ENCODE measurements at regions of chr3 and their contacts with region 1.

Region 1: GRCh38 chr3:187738331-187739093 is 6.8 kb downstream of the BCL6 start:
- DNase-seq: peak; percentile 48 to 85 (median 57)
- ATAC-seq: peak; percentile 48
- H3K4me3 ChIP-seq: peak overlapping the region; percentile 96
- H3K4me3 Mint-ChIP-seq: peak overlapping the region; percentile 100
- H3K27ac ChIP-seq: peak overlapping the region in 1 of 2 donors; percentile 56
- H3K27ac Mint-ChIP-seq: peak overlapping the region; percentile 99
- H3K4me1 ChIP-seq: peaks cover 65% of the 10 kb centered on the region
- H3K4me1 Mint-ChIP-seq: peaks cover 51% of the 10 kb centered on the region
- H3K27me3 ChIP-seq: no peaks in the 10 kb centered on the region
- H3K27me3 Mint-ChIP-seq: no peaks in the 10 kb centered on the region
- CTCF ChIP-seq: peak; percentile 91

Region 2: DNA sequence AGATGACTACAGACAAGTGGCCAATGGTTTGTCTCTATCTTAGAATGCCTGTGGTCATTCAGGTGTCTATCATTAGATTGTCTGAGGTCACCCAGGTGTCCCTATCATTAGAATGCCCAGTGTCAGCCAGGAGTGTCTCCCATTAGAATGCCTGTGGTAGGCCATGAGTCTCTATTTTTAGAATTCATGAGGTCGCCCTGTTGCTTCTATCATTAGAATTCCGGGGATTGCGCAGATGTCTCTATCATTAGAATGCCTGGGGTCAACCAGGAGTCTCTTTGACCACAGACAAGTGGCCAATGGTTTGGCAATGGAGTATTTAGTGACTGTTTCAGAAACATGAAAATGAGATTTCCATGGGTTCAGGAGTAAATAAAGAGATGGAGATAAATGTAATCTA is 43.7 kb before region 1 on chr3:
- CTCF ChIA-PET with region 1: no interaction called
- POLR2A ChIA-PET with region 1: no interaction called
- intact Hi-C with region 1: no loop called
- DNase-seq: no peak
- ATAC-seq: no peak
- H3K4me3 ChIP-seq: no peak overlapping the region
- H3K4me3 Mint-ChIP-seq: no peak overlapping the region
- H3K27ac ChIP-seq: no peak overlapping the region
- H3K27ac Mint-ChIP-seq: no peak overlapping the region
- H3K4me1 ChIP-seq: no peaks in the 10 kb centered on the region
- H3K4me1 Mint-ChIP-seq: no peaks in the 10 kb centered on the region
- H3K27me3 ChIP-seq: peaks cover 0 to 10% of the 10 kb centered on the region in 2 experiments
- H3K27me3 Mint-ChIP-seq: peaks cover 44% of the 10 kb centered on the region
- CTCF ChIP-seq: no peak

Region 3: GRCh38 chr3:187974871-187975271 is 236.4 kb after region 1 on chr3:
- CTCF ChIA-PET with region 1: interaction called, 13 read pairs
- POLR2A ChIA-PET with region 1: interaction called, 4 read pairs
- intact Hi-C with region 1: no loop called
- DNase-seq: peak in 3 of 14 experiments; percentile 68 to 78 (median 73)
- ATAC-seq: peak; percentile 64
- H3K4me3 ChIP-seq: peak overlapping the region; percentile 24
- H3K4me3 Mint-ChIP-seq: peak overlapping the region; percentile 43
- H3K27ac ChIP-seq: peak overlapping the region; percentile 39 to 65
- H3K27ac Mint-ChIP-seq: peak overlapping the region; percentile 84
- H3K4me1 ChIP-seq: peaks cover 50% of the 10 kb centered on the region
- H3K4me1 Mint-ChIP-seq: peaks cover 54% of the 10 kb centered on the region
- H3K27me3 ChIP-seq: no peaks in the 10 kb centered on the region
- H3K27me3 Mint-ChIP-seq: no peaks in the 10 kb centered on the region
- CTCF ChIP-seq: peak; percentile 56

Region 4: DNA sequence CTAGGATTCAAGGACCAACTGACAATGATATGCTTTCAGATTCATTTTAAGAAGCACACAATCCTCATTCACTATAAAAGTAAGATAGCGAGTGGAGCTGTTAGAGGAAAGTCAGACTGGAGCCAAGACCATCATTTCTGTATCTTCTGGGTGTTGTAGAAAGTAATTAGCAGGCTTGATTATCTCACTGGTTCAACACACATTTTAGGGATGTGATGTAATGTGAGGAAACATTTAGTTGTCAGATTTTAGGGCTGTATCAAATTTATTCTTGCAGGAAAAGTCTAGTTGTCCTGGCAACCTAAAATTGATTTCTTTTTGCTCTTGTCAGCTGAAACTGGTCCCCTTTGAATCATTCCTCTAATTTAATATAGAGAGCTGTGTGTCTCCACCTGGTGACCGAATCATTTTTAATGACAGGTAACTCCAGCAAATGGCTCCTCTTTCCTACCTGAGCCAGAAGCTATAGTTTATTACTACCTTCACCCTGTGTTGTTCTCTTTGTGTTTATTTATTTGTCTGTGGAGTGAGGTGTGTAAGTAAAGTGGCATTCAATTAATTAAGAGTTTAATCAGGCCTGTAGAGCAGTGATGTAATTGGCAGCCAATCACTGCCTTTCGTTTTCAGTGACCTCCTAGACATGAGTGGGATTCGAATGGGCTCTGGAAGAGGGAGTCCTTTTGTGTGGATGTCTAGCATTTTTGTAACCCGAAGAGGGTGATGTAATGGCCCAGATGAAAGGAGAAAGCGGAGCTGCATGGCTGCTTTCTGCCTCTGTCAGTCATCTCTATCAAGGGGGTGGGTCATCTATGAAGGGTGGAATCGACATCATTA is 541.2 kb after region 1 on chr3:
- CTCF ChIA-PET with region 1: interaction called, 8 read pairs
- POLR2A ChIA-PET with region 1: no interaction called
- intact Hi-C with region 1: loop called in 1 of 2 experiments (anchors 5 kb)
- DNase-seq: peak in 2 of 14 experiments; percentile 23 to 25
- ATAC-seq: no peak
- H3K4me3 ChIP-seq: no peak overlapping the region
- H3K4me3 Mint-ChIP-seq: no peak overlapping the region
- H3K27ac ChIP-seq: no peak overlapping the region
- H3K27ac Mint-ChIP-seq: no peak overlapping the region
- H3K4me1 ChIP-seq: peaks cover 9% of the 10 kb centered on the region
- H3K4me1 Mint-ChIP-seq: peaks cover 22% of the 10 kb centered on the region
- H3K27me3 ChIP-seq: no peaks in the 10 kb centered on the region
- H3K27me3 Mint-ChIP-seq: no peaks in the 10 kb centered on the region
- CTCF ChIP-seq: no peak

Region 5: DNA sequence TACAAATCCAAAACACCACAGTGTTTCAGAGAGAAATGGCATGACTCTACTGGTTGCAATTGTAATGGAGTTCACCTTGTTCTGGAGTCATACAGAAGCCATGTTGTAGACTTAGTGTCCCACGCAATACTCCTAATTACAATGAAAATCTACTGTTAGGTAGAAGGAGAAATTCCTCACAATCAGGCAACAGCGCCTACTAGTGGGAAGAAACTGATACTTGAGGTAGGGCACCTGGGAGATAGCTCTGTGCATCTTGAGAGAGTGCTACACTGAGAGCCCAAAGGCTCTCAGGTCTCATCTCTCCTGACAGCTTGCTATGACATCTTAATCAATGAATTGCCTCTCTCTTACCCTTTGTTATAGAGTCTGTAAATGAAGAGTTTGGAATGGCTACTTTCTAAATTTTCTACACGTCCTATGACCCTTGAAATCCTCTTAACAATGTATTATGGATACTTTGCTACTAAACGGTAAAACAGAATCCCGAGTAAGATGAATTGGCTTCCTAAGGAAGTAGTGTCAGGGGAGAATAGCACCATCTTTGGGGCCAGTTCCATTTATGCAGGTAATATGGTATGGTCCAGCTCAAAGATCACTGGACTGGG is 1010.6 kb after region 1 on chr3:
- CTCF ChIA-PET with region 1: interaction called, 57 read pairs
- POLR2A ChIA-PET with region 1: interaction called, 16 read pairs
- intact Hi-C with region 1: loop called (anchors 1 kb)
- DNase-seq: peak; percentile 10 to 79 (median 44)
- ATAC-seq: peak; percentile 80
- H3K4me3 ChIP-seq: no peak overlapping the region
- H3K4me3 Mint-ChIP-seq: no peak overlapping the region
- H3K27ac ChIP-seq: no peak overlapping the region
- H3K27ac Mint-ChIP-seq: no peak overlapping the region
- H3K4me1 ChIP-seq: no peaks in the 10 kb centered on the region
- H3K4me1 Mint-ChIP-seq: peaks cover 5% of the 10 kb centered on the region
- H3K27me3 ChIP-seq: no peaks in the 10 kb centered on the region
- H3K27me3 Mint-ChIP-seq: no peaks in the 10 kb centered on the region
- CTCF ChIP-seq: peak; percentile 71

Region 6: DNA sequence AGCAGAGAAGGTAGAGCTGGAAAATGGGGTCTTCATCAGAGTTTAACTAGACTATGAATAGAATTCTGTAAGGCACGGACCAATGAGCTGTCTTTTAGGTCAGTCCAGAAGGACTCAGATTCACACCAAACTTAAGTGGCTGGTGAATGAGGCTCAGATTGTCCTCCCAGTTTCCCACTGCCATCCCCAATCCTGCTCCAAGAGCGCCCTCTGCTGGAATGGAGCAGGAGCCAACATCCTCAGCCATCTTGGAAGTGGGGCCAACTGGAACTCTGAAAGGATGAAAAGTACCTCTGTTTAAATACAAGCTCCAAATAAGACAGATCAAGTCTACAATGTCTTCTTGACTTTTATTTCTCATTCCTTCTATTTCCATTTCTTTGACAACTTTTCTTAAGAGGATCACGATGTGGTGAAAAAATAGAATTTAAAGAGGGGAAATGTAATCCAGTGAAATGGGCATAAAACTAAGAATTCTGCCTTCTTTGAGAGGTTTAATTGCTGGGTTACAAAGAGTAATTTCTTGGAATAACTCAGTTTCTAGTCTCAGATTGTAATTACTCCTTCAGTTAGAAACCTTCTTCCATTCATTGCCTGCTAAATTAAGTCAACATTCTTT is 1216.2 kb after region 1 on chr3:
- CTCF ChIA-PET with region 1: interaction called, 80 read pairs
- POLR2A ChIA-PET with region 1: interaction called, 54 read pairs
- intact Hi-C with region 1: loop called (anchors 1 kb)
- DNase-seq: peak; percentile 51 to 85 (median 64)
- ATAC-seq: peak; percentile 78
- H3K4me3 ChIP-seq: no peak overlapping the region
- H3K4me3 Mint-ChIP-seq: no peak overlapping the region
- H3K27ac ChIP-seq: no peak overlapping the region
- H3K27ac Mint-ChIP-seq: no peak overlapping the region
- H3K4me1 ChIP-seq: peaks cover 2% of the 10 kb centered on the region
- H3K4me1 Mint-ChIP-seq: no peaks in the 10 kb centered on the region
- H3K27me3 ChIP-seq: no peaks in the 10 kb centered on the region
- H3K27me3 Mint-ChIP-seq: peaks cover 9% of the 10 kb centered on the region
- CTCF ChIP-seq: peak; percentile 80

Region 7: GRCh38 chr3:189148081-189148507 is 1409.6 kb after region 1 on chr3:
- CTCF ChIA-PET with region 1: interaction called, 30 read pairs
- POLR2A ChIA-PET with region 1: interaction called, 35 read pairs
- intact Hi-C with region 1: loop called (anchors 1 kb)
- DNase-seq: peak; percentile 53 to 82 (median 63)
- ATAC-seq: peak; percentile 75
- H3K4me3 ChIP-seq: no peak overlapping the region
- H3K4me3 Mint-ChIP-seq: no peak overlapping the region
- H3K27ac ChIP-seq: no peak overlapping the region
- H3K27ac Mint-ChIP-seq: no peak overlapping the region
- H3K4me1 ChIP-seq: peaks cover 8% of the 10 kb centered on the region
- H3K4me1 Mint-ChIP-seq: peaks cover 10% of the 10 kb centered on the region
- H3K27me3 ChIP-seq: no peaks in the 10 kb centered on the region
- H3K27me3 Mint-ChIP-seq: no peaks in the 10 kb centered on the region
- CTCF ChIP-seq: peak; percentile 79

Measured in CD4-positive, alpha-beta T cell (primary cell).